Sigmoid colon (tissue), 7 donors: ENCODE measurements at regions of chr22 and their contacts with region 1.

Region 1: GRCh38 chr22:45499746-45500145 is 2.9 kb upstream of the FBLN1 start:
- DNase-seq: peak; percentile 92
- H3K4me3 ChIP-seq: no peak overlapping the region
- H3K27ac ChIP-seq: peak overlapping the region; percentile 20 to 50 (median 46)
- H3K4me1 ChIP-seq: peaks cover 0 to 37% (median 27%) of the 10 kb centered on the region in 4 donors
- H3K27me3 ChIP-seq: peaks cover 8 to 21% (median 11%) of the 10 kb centered on the region in 3 donors
- CTCF ChIP-seq: no peak
- EP300 ChIP-seq: no peak
- POLR2A ChIP-seq: no peak

Region 2: DNA sequence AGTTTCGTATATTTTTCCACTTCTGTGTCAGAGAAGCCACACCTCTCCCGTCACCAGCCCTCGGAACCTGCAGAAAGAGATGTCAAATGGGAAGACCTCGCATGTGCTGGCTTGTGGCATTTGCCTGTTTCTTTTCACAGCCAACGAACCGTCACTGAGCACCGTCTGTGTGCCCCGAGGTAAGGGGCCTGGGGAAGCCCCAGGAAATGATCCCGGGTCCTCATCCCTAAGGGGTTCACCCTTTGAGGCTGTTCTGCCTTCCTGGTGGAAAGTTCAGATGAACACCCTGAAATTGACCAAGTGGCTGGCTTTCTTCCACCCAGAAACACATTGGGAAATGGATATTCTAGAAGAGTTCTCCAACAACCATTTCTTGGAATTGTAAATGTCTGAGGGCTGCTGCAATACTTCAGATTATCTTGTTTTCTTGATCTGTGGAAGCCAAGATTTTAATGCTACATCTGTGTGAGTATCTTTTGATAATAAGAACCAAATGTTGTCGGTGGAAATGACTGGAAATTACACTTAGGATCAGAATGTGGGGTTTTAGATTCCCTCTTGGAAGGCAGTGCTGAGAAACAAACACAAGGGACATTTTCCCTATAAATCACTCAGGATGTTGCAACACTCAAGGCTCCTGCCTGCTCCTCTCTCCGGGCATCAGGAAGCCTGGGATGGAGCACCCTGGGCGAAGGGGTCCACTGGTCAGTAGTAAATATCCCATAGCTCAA is 48.7 kb before region 1 on chr22:
- intact Hi-C with region 1: loop called (anchors 5 kb)
- DNase-seq: peak; percentile 83
- H3K4me3 ChIP-seq: no peak overlapping the region
- H3K27ac ChIP-seq: peak overlapping the region; percentile 59 to 72 (median 68)
- H3K4me1 ChIP-seq: peaks cover 0 to 10% (median 6%) of the 10 kb centered on the region in 4 donors
- H3K27me3 ChIP-seq: no peaks in the 10 kb centered on the region
- CTCF ChIP-seq: no peak
- EP300 ChIP-seq: no peak
- POLR2A ChIP-seq: no peak